Tibial artery (tissue), 4 donors: ENCODE measurements at regions of chr13 and their contacts with region 1.

Region 1: DNA sequence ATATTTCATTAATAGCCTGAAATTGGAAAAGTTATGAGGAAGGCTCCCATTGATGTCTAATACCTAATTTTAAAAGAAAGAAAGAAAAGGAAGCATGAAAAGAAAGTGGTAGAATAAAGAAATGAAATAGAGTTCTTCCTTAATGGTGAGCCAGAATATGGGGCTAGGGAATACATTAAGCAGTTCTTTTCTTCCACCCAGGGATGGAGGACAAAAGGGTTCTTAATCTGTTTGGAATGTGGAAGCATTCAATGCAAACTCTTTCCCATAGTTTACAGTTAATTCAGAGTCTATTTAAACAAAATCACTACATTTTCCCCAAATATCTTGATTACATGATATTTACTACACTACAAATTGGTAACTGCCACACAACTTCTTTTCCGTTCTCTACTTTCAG is 18.4 kb upstream of the ZMYM2 start:
- DNase-seq: no peak
- H3K4me3 ChIP-seq: no peak overlapping the region
- H3K27ac ChIP-seq: no peak overlapping the region
- H3K4me1 ChIP-seq: no peaks in the 10 kb centered on the region
- H3K27me3 ChIP-seq: no peaks in the 10 kb centered on the region
- CTCF ChIP-seq: no peak

Region 2: DNA sequence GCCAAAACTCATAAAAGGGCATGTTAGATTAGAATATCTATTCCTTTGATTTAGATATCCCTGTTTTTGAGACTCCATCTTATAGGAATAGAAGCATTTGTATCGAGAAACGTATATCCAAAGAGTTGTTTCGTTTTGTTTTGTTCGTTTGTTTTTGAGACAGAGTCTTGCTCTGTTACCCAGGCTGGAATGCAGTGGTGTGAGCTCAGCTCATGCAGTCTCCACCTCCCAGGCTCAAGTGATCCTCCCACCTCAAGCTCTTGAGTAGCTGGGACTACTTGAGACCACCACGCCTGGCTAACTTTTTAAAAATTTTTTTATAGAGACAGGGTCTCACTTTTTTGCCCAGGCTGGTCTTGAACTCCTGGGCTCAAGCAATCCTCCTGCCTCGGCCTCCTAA is 50.1 kb before region 1 on chr13:
- intact Hi-C with region 1: loop called (anchors 2 kb)
- DNase-seq: no peak
- H3K4me3 ChIP-seq: no peak overlapping the region
- H3K27ac ChIP-seq: no peak overlapping the region
- H3K4me1 ChIP-seq: no peaks in the 10 kb centered on the region
- H3K27me3 ChIP-seq: no peaks in the 10 kb centered on the region
- CTCF ChIP-seq: no peak